Common myeloid progenitor, CD34-positive (primary cell): ENCODE measurements at regions of chr11 and their contacts with region 1.

Region 1: DNA sequence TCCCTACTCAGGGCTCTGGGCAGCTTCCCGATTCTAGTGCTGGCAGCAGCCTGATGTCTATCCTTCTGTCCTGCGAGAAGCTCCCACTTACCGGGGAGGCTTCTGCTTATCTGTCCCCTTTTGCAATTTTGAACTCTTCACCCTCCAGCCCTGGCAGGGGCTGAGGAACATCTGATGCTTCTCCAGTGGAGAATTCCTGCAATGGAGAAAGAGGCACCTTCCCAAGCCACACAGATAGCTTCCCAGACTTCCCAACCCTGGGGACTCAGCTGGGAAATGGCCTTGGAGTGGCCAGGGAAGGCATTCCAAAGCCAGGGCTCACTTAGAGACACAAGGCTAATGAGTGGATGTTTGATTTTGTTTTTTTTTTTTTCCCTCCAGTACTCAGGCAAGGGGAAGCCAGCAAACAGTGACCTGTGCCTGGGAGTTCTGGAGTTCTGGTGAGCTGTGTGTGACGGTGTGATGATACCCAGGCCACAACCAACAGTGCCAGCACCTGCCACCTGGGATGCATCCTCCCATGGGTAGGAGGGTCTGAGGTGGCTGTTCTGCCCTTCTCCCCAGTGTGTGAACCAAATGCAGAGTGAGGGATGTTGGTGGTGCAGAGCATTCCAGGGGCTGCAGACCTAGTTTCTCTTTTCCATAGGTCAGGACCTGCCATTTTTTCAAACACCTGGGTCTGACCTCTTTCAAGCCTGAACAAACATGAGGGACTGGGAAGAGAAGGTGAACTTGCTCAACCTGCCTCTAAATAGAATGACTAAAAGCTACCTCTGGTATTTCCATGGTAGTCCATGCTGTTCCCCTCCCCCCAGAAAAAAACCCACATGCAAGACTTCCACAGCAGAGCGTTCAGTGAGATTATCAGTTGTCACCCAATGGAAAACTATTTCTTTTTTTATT is 95.1 kb downstream of the CCDC81 start:
- DNase-seq: no peak
- H3K4me3 ChIP-seq: no peak overlapping the region
- H3K27ac ChIP-seq: no peak overlapping the region
- H3K4me1 ChIP-seq: no peaks in the 10 kb centered on the region
- H3K27me3 ChIP-seq: no peaks in the 10 kb centered on the region

Region 2: DNA sequence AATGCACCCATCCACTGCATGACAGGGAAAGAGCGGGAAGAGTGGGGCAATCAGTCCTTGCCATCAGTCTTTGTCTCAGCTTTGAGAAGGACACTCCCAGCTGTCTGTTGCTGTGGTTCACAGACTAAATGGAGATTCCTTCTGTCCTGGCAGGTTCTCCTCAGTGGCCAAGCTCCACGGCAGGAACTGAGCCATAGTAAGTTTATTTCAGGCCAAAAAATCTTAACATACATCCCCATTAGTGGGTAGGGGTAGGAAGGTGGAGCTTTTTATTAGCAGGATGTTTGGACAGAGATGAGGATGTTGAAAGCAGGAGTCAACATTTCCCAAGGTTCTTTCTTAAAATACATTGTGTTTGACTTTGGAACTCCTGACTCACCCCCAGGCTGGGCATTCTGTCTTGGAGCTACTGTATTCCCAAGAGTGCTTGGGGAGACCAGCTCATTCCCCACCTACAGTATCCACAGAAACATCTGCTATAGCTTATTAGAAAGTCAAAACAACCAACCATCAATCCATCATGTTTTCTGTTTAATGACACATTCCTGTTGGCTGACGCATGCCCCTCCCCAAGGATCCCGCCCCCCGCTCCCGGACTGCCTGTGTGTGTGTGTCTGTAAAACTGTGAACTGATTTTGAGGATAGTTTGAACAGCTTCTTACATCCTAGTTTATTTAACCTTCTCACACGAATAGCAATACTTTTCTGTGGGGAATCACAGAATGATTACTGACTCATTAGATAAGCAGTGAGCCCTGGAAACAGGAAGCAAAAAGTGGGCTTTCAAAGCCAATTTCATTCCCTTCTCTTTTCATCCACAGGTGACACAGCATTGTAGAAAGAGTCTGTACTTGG is 14.4 kb after region 1 on chr11:
- CTCF ChIA-PET with region 1: interaction called, 14 read pairs
- POLR2A ChIA-PET with region 1: no interaction called
- DNase-seq: peak in 2 of 3 donors; percentile 23 to 27
- H3K4me3 ChIP-seq: no peak overlapping the region
- H3K27ac ChIP-seq: no peak overlapping the region
- H3K4me1 ChIP-seq: peaks cover 3 to 18% (median 15%) of the 10 kb centered on the region in 4 experiments
- H3K27me3 ChIP-seq: no peaks in the 10 kb centered on the region